ENCODE measurements at regions of chr12 and their contacts with region 1.

Region 1: GRCh38 chr12:106709068-106709511 is 65.4 kb upstream of the RIC8B start:
- DNase-seq: no peak

Region 2: DNA sequence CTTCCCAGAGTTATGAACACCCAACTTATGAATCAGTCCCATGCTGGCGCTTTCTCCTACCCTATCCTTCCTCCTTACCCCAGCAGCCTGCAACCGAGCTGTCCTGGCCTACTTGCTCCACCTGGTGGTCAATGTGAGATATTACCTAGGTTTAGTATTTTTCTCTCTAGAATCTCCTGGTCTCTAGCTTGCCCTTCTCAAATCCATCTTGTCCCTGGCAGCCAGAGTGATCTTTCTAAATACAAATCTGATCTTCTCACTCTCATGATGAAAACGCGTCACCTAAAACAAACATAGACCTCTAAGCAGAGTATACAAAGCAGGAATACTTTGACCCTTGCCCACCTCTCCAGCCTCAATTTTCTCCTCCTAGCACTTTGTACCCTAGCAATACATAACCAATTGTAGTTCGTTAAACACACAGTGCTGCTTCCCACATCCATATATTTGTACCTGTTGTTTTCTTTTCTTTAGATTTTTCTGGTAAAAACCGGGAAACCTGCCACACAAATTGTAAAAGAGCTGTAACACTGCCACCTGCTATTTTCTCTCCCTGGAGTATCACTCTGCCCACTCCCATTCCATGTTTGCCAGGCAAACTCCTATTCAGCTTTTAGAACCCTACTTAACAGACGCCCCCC is 426.5 kb before region 1 on chr12:
- intact Hi-C with region 1: no loop called
- DNase-seq: no peak

Region 3: GRCh38 chr12:106682592-106683234 is 26.4 kb before region 1 on chr12:
- intact Hi-C with region 1: loop called in 1 of 2 experiments (anchors 1 kb)
- DNase-seq: no peak

Region 4: GRCh38 chr12:106747973-106748436 is 38.9 kb after region 1 on chr12:
- intact Hi-C with region 1: no loop called
- DNase-seq: no peak